Posterior vena cava (tissue), 2 donors: ENCODE measurements at regions of chr19 and their contacts with region 1.

Region 1: DNA sequence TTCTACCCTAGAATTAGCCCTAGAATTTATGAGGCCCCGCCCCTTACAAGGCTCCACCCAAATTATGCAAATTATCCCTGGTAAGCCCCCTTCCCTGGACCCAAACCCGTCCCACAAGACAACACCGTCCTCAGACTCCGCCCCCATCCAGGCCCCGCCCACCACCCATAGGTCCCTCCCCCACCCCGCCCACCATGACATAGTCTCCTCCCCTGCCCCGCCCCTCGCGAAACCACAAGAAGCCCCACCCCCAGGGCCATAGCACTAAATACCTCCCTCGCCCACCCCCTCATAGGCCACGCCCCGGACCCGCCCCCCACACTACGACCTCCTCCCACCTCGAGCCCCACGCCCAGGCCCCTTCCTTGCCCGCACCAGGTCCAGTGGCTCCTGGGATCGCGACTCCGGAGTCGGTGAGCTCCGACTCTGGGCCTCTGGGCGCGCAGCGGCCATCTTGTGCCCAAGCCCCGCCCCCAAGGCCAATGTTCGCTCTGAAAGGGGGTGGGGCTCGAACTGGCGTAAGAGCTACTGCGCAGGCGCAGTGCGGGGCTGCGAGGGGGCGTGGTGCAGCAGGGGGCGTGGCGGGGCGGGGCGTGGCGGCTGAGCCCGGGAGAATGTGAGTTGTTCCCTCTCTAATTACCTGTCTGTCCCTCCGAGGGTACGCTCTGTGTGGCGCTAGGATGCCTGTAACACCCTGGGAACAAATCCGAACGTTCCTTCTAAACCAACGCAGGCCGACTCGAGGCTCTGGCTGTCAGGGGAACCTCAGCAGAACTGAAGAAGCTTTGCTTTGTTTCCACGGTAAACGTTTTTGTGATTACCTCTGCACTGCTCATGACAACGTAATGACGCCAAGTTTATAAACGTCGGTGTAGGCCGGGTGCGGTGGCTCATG is at the start of gene ZNF784:
- DNase-seq: peak; percentile 98
- total RNA-seq, gene ZNF784: 3.6 to 4.3 TPM

Region 2: DNA sequence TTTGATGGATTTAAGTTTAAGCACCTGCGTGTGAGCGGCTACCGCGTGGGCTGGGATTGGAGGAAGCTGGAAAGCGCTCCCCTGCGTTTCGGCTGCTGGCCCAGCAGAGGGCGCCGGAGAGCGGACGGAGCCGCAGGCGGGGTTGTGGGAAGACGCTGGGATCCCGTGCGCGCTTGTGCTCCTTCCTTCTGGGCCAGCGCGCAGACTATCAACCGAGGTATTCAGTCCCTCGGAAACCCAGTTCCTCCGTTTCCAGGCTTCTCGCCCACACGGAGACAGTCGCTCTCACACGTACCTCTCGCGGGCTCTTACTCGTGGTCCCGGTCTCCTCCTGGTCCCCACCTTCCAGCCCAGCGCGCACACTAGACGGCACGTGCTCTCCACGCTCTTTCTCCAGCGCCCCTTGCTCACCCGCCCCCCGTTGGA is 79.4 kb after region 1 on chr19:
- intact Hi-C with region 1: no loop called
- DNase-seq: peak; percentile 80

Region 3: GRCh38 chr19:56356944-56357343 is 732.6 kb after region 1 on chr19:
- intact Hi-C with region 1: loop called in 1 of 2 experiments (anchors 5 kb)
- DNase-seq: no peak